ENCODE measurements at regions of chr2 and their contacts with region 1.

Region 1: GRCh38 chr2:111883661-111884591 is at the start of gene ANAPC1:
- DNase-seq: peak; percentile 72 to 90 (median 80)
- ATAC-seq: peak; percentile 96
- H3K4me3 ChIP-seq: peak within 1 kb of the TSS; percentile 83
- H3K4me3 Mint-ChIP-seq: peak within 1 kb of the TSS; percentile 90
- H3K27ac ChIP-seq: peak within 1 kb of the TSS; percentile 73 to 84
- H3K27ac Mint-ChIP-seq: peak within 1 kb of the TSS; percentile 93
- H3K4me1 ChIP-seq: peaks cover 17% of the 10 kb centered on the region
- H3K4me1 Mint-ChIP-seq: peaks cover 17% of the 10 kb centered on the region
- H3K27me3 ChIP-seq: no peaks in the 10 kb centered on the region
- H3K27me3 Mint-ChIP-seq: no peaks in the 10 kb centered on the region
- CTCF ChIP-seq: no peak
- total RNA-seq, gene ANAPC1: 34.0 to 39.5 TPM

Region 2: DNA sequence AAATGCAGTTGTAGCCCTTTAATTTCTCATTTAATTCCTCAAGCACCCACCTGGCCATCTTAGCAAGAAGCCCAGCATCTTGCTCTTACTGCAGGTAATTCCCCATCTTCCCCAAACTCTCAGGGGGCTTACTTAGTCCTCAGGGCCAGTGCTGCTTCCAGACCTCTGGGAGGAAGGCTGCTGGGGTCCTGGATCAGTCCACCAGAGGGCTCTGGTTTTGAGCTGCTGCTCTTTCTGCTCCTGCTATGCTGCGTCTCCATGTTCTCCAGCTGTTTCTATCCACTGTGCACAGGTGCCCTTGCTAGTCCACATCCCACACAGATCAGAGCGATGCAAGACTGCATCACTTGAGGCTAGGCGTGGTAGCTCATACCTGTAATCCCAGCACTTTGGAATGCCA is 136.6 kb after region 1 on chr2:
- CTCF ChIA-PET with region 1: no interaction called
- POLR2A ChIA-PET with region 1: no interaction called
- intact Hi-C with region 1: no loop called
- DNase-seq: no peak
- ATAC-seq: no peak
- H3K4me3 ChIP-seq: no peak overlapping the region
- H3K4me3 Mint-ChIP-seq: no peak overlapping the region
- H3K27ac ChIP-seq: no peak overlapping the region
- H3K27ac Mint-ChIP-seq: no peak overlapping the region
- H3K4me1 ChIP-seq: no peaks in the 10 kb centered on the region
- H3K4me1 Mint-ChIP-seq: no peaks in the 10 kb centered on the region
- H3K27me3 ChIP-seq: no peaks in the 10 kb centered on the region
- H3K27me3 Mint-ChIP-seq: peaks cover 12% of the 10 kb centered on the region
- CTCF ChIP-seq: no peak

Region 3: GRCh38 chr2:112048887-112049286 is 165.0 kb after region 1 on chr2:
- CTCF ChIA-PET with region 1: interaction called, 17 read pairs
- POLR2A ChIA-PET with region 1: interaction called, 4 read pairs
- intact Hi-C with region 1: loop called (anchors 1 kb)
- DNase-seq: peak in 5 of 14 experiments; percentile 13 to 75 (median 70)
- ATAC-seq: peak; percentile 83
- H3K4me3 ChIP-seq: no peak overlapping the region
- H3K4me3 Mint-ChIP-seq: no peak overlapping the region
- H3K27ac ChIP-seq: no peak overlapping the region
- H3K27ac Mint-ChIP-seq: no peak overlapping the region
- H3K4me1 ChIP-seq: peaks cover 5% of the 10 kb centered on the region
- H3K4me1 Mint-ChIP-seq: peaks cover 7% of the 10 kb centered on the region
- H3K27me3 ChIP-seq: no peaks in the 10 kb centered on the region
- H3K27me3 Mint-ChIP-seq: no peaks in the 10 kb centered on the region
- CTCF ChIP-seq: peak; percentile 93

Region 4: DNA sequence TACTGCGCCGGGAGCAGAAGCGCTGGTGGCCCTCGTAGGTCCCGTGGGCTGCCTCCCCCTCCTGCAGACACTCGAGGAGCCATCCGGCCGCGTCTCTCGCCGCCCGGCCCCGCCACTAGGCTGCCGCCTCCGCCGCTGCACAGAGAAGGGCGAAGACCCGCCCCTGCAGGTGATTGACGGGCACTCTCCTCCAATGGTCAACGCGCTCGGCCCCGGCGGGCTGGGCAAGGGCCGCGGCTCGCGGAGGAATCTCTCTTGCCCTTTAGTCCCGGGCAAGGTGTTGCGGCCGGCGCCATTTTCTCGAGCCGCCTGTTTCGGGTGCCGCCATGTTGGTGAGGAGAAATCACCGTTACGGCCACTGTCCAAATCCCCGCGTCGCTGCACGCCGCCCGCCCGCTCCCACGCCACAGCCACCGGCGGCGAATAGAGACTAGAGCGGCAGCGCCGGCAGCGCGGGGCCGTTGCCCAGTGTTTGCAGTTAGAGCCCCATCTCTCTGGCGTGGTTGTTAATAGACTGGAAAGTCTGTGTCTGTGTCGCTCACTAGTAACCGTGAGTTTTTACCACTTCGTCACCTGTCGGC is 391.5 kb after region 1 on chr2 and contains the start of gene ZC3H6:
- CTCF ChIA-PET with region 1: no interaction called
- POLR2A ChIA-PET with region 1: no interaction called
- intact Hi-C with region 1: loop called in 1 of 2 experiments (anchors 10 kb)
- DNase-seq: peak; percentile 97 to 100 (median 100)
- ATAC-seq: peak; percentile 90
- H3K4me3 ChIP-seq: peak within 1 kb of the TSS; percentile 94
- H3K4me3 Mint-ChIP-seq: peak within 1 kb of the TSS; percentile 98
- H3K27ac ChIP-seq: peak within 1 kb of the TSS; percentile 100
- H3K27ac Mint-ChIP-seq: peak within 1 kb of the TSS; percentile 100
- H3K4me1 ChIP-seq: peaks cover 8% of the 10 kb centered on the region
- H3K4me1 Mint-ChIP-seq: peaks cover 33% of the 10 kb centered on the region
- H3K27me3 ChIP-seq: no peaks in the 10 kb centered on the region
- H3K27me3 Mint-ChIP-seq: no peaks in the 10 kb centered on the region
- CTCF ChIP-seq: no peak
- total RNA-seq, gene ZC3H6: 18.0 to 21.4 TPM

Region 5: DNA sequence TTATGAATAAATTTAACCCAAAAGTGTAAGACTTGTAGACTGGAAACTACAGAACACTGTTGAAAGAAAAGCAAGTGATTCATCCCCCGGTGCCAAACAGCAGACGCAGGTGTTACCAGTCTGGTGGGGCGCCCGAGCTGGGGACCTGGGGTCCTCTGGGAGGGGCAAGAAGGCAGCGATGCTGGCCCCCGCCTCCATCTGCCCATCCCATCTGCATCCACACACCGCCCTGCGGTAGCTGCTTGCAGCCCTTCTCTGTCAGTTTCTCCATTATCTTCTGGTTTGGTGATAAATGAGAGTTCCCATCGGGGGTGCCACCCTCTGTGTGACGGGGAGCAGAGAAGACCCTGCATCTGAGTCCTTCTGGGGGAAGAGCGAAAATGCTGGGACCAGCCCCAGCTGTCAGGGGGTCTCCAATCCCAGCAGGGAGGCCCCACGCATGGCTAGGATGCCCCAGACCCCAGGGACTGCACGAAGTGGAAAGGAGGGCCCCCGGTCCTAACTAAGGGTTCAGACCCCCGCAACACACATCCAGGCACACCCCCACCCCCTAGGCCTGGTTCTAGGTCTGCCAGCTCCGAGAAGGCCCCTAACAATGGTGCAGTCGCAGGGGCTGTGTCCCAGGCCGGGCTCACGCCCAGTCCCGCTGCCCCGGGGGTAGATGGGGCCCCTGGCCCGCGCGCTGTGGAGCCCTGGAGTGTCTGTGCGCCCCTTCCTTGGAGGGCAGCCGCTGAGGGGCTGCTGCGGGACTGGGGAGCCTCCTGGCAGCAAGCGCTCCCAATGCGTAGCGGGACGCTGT is 550.2 kb after region 1 on chr2:
- CTCF ChIA-PET with region 1: no interaction called
- POLR2A ChIA-PET with region 1: no interaction called
- intact Hi-C with region 1: loop called in 1 of 2 experiments (anchors 10 kb)
- DNase-seq: peak in 1 of 14 experiments; percentile 34
- ATAC-seq: no peak
- H3K4me3 ChIP-seq: no peak overlapping the region
- H3K4me3 Mint-ChIP-seq: no peak overlapping the region
- H3K27ac ChIP-seq: no peak overlapping the region
- H3K27ac Mint-ChIP-seq: peak overlapping the region; percentile 58
- H3K4me1 ChIP-seq: peaks cover 15% of the 10 kb centered on the region
- H3K4me1 Mint-ChIP-seq: peaks cover 17% of the 10 kb centered on the region
- H3K27me3 ChIP-seq: no peaks in the 10 kb centered on the region
- H3K27me3 Mint-ChIP-seq: peaks cover 18% of the 10 kb centered on the region
- CTCF ChIP-seq: no peak

Region 6: DNA sequence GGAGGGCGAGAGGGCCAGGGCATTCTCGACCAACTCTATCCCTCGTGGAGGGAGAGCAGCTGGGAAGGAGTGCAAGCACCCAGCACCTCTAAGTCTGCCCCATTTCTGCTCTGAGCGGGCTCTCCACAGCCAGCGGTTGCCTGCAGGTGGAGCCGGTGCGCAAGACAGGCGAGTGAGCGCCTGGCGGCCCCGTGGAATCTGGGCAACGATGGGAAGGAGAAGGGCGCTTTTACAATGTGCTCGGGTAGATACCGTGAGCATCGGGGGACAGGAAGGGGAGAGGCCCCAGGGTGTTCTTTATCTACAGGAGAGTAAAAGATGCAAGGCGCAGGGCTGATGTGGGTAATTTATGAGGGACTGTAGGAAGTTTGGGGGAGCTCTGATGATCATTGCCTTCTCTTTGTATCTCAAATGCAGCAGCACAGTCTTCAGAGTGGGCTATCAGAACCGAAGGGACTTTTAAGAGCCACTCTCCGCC is 597.2 kb after region 1 on chr2:
- CTCF ChIA-PET with region 1: no interaction called
- POLR2A ChIA-PET with region 1: no interaction called
- intact Hi-C with region 1: loop called in 1 of 2 experiments (anchors 5 kb)
- DNase-seq: peak; percentile 72 to 91 (median 79)
- ATAC-seq: peak; percentile 81
- H3K4me3 ChIP-seq: peak overlapping the region; percentile 77
- H3K4me3 Mint-ChIP-seq: peak overlapping the region; percentile 93
- H3K27ac ChIP-seq: peak overlapping the region; percentile 48 to 75
- H3K27ac Mint-ChIP-seq: peak overlapping the region; percentile 85
- H3K4me1 ChIP-seq: peaks cover 28% of the 10 kb centered on the region
- H3K4me1 Mint-ChIP-seq: peaks cover 25% of the 10 kb centered on the region
- H3K27me3 ChIP-seq: no peaks in the 10 kb centered on the region
- H3K27me3 Mint-ChIP-seq: no peaks in the 10 kb centered on the region
- CTCF ChIP-seq: peak; percentile 84

Region 7: DNA sequence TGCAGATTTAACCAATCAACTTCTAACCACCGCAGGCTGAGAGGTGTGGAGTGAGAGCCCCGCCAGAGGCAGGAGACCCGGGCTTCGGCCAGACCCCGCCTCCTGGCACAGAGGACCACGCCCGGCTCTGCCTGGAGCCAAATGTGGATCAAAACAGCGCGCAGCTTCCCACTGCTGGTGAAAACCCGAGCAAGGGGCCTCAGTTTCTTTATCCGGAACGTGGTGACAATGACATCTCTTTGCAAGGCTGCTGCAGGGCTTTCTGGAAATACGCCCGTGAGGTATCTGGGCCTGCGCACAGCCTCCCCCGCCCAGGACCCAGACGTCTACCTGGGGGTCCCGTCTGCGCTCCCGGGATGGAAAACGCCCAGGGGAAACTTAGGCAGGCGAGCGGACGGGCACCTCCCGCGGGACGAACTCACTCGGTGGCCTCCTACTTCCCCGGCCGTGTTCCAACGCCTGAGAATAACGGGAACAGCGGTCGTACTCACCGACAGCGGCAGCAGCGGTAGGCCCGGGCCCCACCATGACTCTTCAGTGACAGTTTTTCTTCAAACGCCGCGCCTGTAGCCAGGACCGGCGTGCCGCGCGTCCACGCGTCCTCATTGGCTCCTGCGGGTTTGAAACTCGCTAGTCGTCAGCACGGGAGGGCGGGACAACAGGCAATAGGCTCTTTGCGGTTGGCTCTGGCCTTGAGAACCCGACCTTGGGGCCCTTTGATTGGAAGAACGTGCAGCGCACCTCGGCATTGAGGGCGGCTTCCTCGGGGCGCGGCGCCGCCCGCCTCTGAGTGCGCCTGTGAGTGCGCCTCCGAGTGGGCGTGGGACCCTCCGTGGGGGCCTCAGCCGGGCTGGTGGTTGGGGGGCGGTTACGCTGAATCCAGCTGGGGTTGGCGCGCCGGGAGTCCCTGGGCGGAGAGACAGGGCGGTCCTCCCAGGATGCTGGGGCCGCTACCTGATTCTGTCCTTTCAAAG is 880.4 kb after region 1 on chr2 and contains the start of gene CKAP2L:
- CTCF ChIA-PET with region 1: no interaction called
- POLR2A ChIA-PET with region 1: no interaction called
- intact Hi-C with region 1: loop called in 1 of 2 experiments (anchors 10 kb)
- DNase-seq: peak; percentile 89 to 98 (median 93)
- ATAC-seq: peak; percentile 99
- H3K4me3 ChIP-seq: peak within 1 kb of the TSS; percentile 85
- H3K4me3 Mint-ChIP-seq: peak within 1 kb of the TSS; percentile 94
- H3K27ac ChIP-seq: peak within 1 kb of the TSS in 1 of 2 donors; percentile 18
- H3K27ac Mint-ChIP-seq: peak within 1 kb of the TSS; percentile 14
- H3K4me1 ChIP-seq: peaks cover 21% of the 10 kb centered on the region
- H3K4me1 Mint-ChIP-seq: peaks cover 37% of the 10 kb centered on the region
- H3K27me3 ChIP-seq: no peaks in the 10 kb centered on the region
- H3K27me3 Mint-ChIP-seq: no peaks in the 10 kb centered on the region
- CTCF ChIP-seq: no peak
- total RNA-seq, gene CKAP2L: 0.08 to 0.50 TPM